B cell (primary cell): ENCODE measurements at regions of chr2 and their contacts with region 1.

Region 1: DNA sequence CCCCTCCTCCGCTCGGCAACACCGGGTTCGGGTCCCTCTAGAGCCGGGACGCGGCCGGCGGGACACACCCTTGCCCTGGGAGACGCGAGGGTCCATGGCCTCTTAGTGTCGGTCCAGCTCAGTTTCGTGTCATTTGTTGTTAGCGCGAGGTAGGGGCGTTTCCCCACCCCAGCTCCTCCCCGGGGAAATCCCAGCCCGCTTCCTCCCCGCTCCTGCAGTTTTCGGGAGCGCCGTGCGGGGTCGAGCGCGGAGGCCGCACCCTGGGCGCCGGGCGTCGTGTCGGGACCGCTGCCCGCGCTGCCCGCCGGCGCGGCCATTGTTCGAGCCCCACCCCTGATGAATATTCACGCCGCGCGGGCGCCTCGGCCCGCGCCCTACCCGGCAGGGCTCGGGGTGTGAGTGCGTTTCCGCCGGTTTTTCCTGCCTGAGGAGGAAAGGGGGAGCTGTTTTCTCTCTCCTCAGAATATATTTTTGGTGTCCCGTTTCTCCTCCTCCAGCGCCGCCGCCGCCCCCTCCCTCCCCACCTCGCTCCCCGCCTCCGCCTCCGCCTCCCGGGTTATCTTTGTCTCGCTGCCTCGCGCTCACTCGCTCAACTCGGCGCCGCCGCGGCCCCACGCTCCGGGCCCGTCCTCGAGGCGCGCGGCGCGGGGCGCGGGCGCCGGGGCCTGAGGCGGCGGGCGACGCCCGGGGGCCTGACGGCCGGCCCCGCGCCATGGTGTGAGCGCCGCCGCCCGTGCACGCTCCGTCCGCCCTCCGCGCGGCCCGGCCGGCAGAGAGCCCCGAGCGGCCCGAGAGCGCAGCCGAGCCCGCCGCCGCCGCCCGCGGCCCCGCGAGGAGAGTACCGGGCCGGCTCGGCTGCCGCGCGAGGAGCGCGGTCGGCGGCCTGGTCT is at the start of gene MAP4K4:
- DNase-seq: peak; percentile 86
- ATAC-seq: peak; percentile 73
- H3K4me3 ChIP-seq: peak within 1 kb of the TSS; percentile 64 to 98 (median 80)
- H3K4me3 Mint-ChIP-seq: peak within 1 kb of the TSS; percentile 97
- H3K27ac ChIP-seq: peak within 1 kb of the TSS; percentile 59 to 78
- H3K27ac Mint-ChIP-seq: peak within 1 kb of the TSS; percentile 97
- H3K4me1 ChIP-seq: peaks cover 28 to 31% of the 10 kb centered on the region in 2 donors
- H3K4me1 Mint-ChIP-seq: peaks cover 24% of the 10 kb centered on the region
- H3K27me3 ChIP-seq: no peaks in the 10 kb centered on the region
- H3K27me3 Mint-ChIP-seq: no peaks in the 10 kb centered on the region
- CTCF ChIP-seq: no peak
- total RNA-seq, gene MAP4K4: 280 and 303 TPM in 2 replicates

Region 2: DNA sequence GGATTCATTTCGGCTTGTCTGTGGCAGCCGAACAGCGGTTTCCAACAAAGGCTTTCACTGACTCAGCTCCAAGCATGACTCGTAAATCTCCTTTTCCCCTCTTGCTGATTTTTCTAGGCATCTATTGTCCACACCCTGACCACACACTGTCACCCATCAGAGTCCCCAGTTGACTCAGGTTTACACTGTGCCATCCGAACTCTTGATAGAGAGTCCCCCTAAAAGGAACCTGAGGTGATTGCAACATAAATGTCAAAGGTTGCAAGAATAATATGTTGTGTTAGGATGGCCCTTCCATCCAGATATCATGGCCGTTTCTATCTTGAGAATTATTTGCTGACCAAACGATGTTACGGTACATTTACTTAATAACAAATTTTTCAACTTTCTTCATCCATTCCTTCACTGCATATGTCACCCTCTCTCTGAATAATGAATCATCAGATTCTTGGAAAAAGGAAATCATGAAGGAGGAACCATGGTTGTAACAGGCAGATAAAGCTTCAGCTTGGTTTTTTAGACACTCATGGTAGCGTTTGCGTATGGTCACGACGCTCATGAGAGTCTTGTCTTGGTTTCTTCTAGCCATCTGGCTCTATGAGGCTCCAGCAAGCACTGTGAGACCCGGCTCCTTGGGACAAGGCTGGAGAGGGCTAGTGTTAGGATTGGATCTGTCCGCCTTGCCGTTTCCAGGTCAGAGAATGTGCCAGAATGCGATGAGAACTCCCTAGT is 805.3 kb before region 1 on chr2:
- CTCF ChIA-PET with region 1: no interaction called
- POLR2A ChIA-PET with region 1: no interaction called
- intact Hi-C with region 1: no loop called
- DNase-seq: no peak
- ATAC-seq: no peak
- H3K4me3 ChIP-seq: no peak overlapping the region
- H3K4me3 Mint-ChIP-seq: no peak overlapping the region
- H3K27ac ChIP-seq: no peak overlapping the region
- H3K27ac Mint-ChIP-seq: no peak overlapping the region
- H3K4me1 ChIP-seq: no peaks in the 10 kb centered on the region
- H3K4me1 Mint-ChIP-seq: no peaks in the 10 kb centered on the region
- H3K27me3 ChIP-seq: no peaks in the 10 kb centered on the region
- H3K27me3 Mint-ChIP-seq: peaks cover 23% of the 10 kb centered on the region
- CTCF ChIP-seq: no peak

Region 3: GRCh38 chr2:101623031-101623521 is 74.3 kb before region 1 on chr2:
- CTCF ChIA-PET with region 1: no interaction called
- POLR2A ChIA-PET with region 1: no interaction called
- intact Hi-C with region 1: loop called (anchors 1 kb)
- DNase-seq: peak; percentile 89
- ATAC-seq: peak; percentile 86
- H3K4me3 ChIP-seq: peak overlapping the region; percentile 9 to 56 (median 16)
- H3K4me3 Mint-ChIP-seq: peak overlapping the region; percentile 62
- H3K27ac ChIP-seq: peak overlapping the region; percentile 75 to 88
- H3K27ac Mint-ChIP-seq: peak overlapping the region; percentile 80
- H3K4me1 ChIP-seq: peaks cover 42 to 57% of the 10 kb centered on the region in 2 donors
- H3K4me1 Mint-ChIP-seq: peaks cover 71% of the 10 kb centered on the region
- H3K27me3 ChIP-seq: no peaks in the 10 kb centered on the region
- H3K27me3 Mint-ChIP-seq: no peaks in the 10 kb centered on the region
- CTCF ChIP-seq: no peak

Region 4: GRCh38 chr2:101710471-101711318 is 13.3 kb after region 1 on chr2:
- CTCF ChIA-PET with region 1: interaction called, 10 read pairs
- POLR2A ChIA-PET with region 1: interaction called, 7 read pairs
- intact Hi-C with region 1: no loop called
- DNase-seq: no peak
- ATAC-seq: peak; percentile 73
- H3K4me3 ChIP-seq: peak overlapping the region in 4 of 5 experiments; percentile 2 to 44 (median 11)
- H3K4me3 Mint-ChIP-seq: peak overlapping the region; percentile 88
- H3K27ac ChIP-seq: peak overlapping the region; percentile 62 to 94
- H3K27ac Mint-ChIP-seq: peak overlapping the region; percentile 66
- H3K4me1 ChIP-seq: peaks cover 97% of the 10 kb centered on the region in 2 donors
- H3K4me1 Mint-ChIP-seq: peaks cover 77% of the 10 kb centered on the region
- H3K27me3 ChIP-seq: no peaks in the 10 kb centered on the region
- H3K27me3 Mint-ChIP-seq: no peaks in the 10 kb centered on the region
- CTCF ChIP-seq: no peak

Region 5: GRCh38 chr2:101725515-101726192 is 28.3 kb after region 1 on chr2:
- CTCF ChIA-PET with region 1: interaction called, 22 read pairs
- POLR2A ChIA-PET with region 1: interaction called, 5 read pairs
- intact Hi-C with region 1: no loop called
- DNase-seq: peak; percentile 60
- ATAC-seq: no peak
- H3K4me3 ChIP-seq: no peak overlapping the region
- H3K4me3 Mint-ChIP-seq: peak overlapping the region; percentile 36
- H3K27ac ChIP-seq: peak overlapping the region in 1 of 2 donors; percentile 86
- H3K27ac Mint-ChIP-seq: peak overlapping the region; percentile 64
- H3K4me1 ChIP-seq: peaks cover 92 to 99% of the 10 kb centered on the region in 2 donors
- H3K4me1 Mint-ChIP-seq: peaks cover 94% of the 10 kb centered on the region
- H3K27me3 ChIP-seq: no peaks in the 10 kb centered on the region
- H3K27me3 Mint-ChIP-seq: no peaks in the 10 kb centered on the region
- CTCF ChIP-seq: peak; percentile 56

Region 6: GRCh38 chr2:101770726-101771125 is 73.4 kb after region 1 on chr2:
- CTCF ChIA-PET with region 1: interaction called, 4 read pairs
- POLR2A ChIA-PET with region 1: no interaction called
- intact Hi-C with region 1: loop called (anchors 5 kb)
- DNase-seq: peak; percentile 59
- ATAC-seq: no peak
- H3K4me3 ChIP-seq: no peak overlapping the region
- H3K4me3 Mint-ChIP-seq: peak overlapping the region; percentile 30
- H3K27ac ChIP-seq: no peak overlapping the region
- H3K27ac Mint-ChIP-seq: peak overlapping the region; percentile 73
- H3K4me1 ChIP-seq: peaks cover 70 to 82% of the 10 kb centered on the region in 2 donors
- H3K4me1 Mint-ChIP-seq: peaks cover 91% of the 10 kb centered on the region
- H3K27me3 ChIP-seq: no peaks in the 10 kb centered on the region
- H3K27me3 Mint-ChIP-seq: no peaks in the 10 kb centered on the region
- CTCF ChIP-seq: peak; percentile 60

Region 7: GRCh38 chr2:101831351-101831865 is 134.0 kb after region 1 on chr2:
- CTCF ChIA-PET with region 1: interaction called, 25 read pairs
- POLR2A ChIA-PET with region 1: no interaction called
- intact Hi-C with region 1: loop called (anchors 1 kb)
- DNase-seq: peak; percentile 75
- ATAC-seq: peak; percentile 86
- H3K4me3 ChIP-seq: no peak overlapping the region
- H3K4me3 Mint-ChIP-seq: no peak overlapping the region
- H3K27ac ChIP-seq: no peak overlapping the region
- H3K27ac Mint-ChIP-seq: peak overlapping the region; percentile 33
- H3K4me1 ChIP-seq: peaks cover 18 to 26% of the 10 kb centered on the region in 2 donors
- H3K4me1 Mint-ChIP-seq: peaks cover 52% of the 10 kb centered on the region
- H3K27me3 ChIP-seq: no peaks in the 10 kb centered on the region
- H3K27me3 Mint-ChIP-seq: no peaks in the 10 kb centered on the region
- CTCF ChIP-seq: peak; percentile 73